ENCODE measurements at regions of chr21 and their contacts with region 1.

Region 1: GRCh38 chr21:31416465-31416864 is 72.4 kb upstream of the TIAM1 start:
- DNase-seq: no peak
- H3K4me3 Mint-ChIP-seq: no peak overlapping the region
- H3K27ac Mint-ChIP-seq: no peak overlapping the region
- H3K4me1 Mint-ChIP-seq: peaks cover 2% of the 10 kb centered on the region
- H3K27me3 Mint-ChIP-seq: peaks cover 1% of the 10 kb centered on the region

Region 2: GRCh38 chr21:31403596-31404333 is 12.7 kb before region 1 on chr21:
- CTCF ChIA-PET with region 1: interaction called, 12 read pairs
- POLR2A ChIA-PET with region 1: no interaction called
- DNase-seq: no peak
- H3K4me3 Mint-ChIP-seq: no peak overlapping the region
- H3K27ac Mint-ChIP-seq: no peak overlapping the region
- H3K4me1 Mint-ChIP-seq: peaks cover 20% of the 10 kb centered on the region
- H3K27me3 Mint-ChIP-seq: no peaks in the 10 kb centered on the region

Region 3: GRCh38 chr21:31460980-31461379 is 44.5 kb after region 1 on chr21:
- CTCF ChIA-PET with region 1: no interaction called
- POLR2A ChIA-PET with region 1: no interaction called
- DNase-seq: no peak
- H3K4me3 Mint-ChIP-seq: no peak overlapping the region
- H3K27ac Mint-ChIP-seq: no peak overlapping the region
- H3K4me1 Mint-ChIP-seq: peaks cover 11% of the 10 kb centered on the region
- H3K27me3 Mint-ChIP-seq: peaks cover 5% of the 10 kb centered on the region